ENCODE measurements at regions of chr2 and their contacts with region 1.

Region 1: GRCh38 chr2:228657807-228658402 is 476.4 kb upstream of the SPHKAP start:
- DNase-seq: no peak
- ATAC-seq: no peak
- H3K4me3 ChIP-seq: no peak overlapping the region
- H3K27ac ChIP-seq: no peak overlapping the region
- H3K4me1 ChIP-seq: no peaks in the 10 kb centered on the region
- H3K27me3 ChIP-seq: no peaks in the 10 kb centered on the region

Region 2: GRCh38 chr2:227939271-227940027 is 718.5 kb before region 1 on chr2:
- intact Hi-C with region 1: loop called in 1 of 4 experiments (anchors 5 kb)
- DNase-seq: no peak
- ATAC-seq: peak in 1 of 2 donors; percentile 56
- H3K4me3 ChIP-seq: no peak overlapping the region
- H3K27ac ChIP-seq: no peak overlapping the region
- H3K4me1 ChIP-seq: no peaks in the 10 kb centered on the region
- H3K27me3 ChIP-seq: no peaks in the 10 kb centered on the region

Region 3: GRCh38 chr2:228048838-228049490 is 608.9 kb before region 1 on chr2:
- intact Hi-C with region 1: loop called (anchors 10 kb)
- DNase-seq: no peak
- ATAC-seq: peak; percentile 81 to 88
- H3K4me3 ChIP-seq: no peak overlapping the region
- H3K27ac ChIP-seq: no peak overlapping the region
- H3K4me1 ChIP-seq: no peaks in the 10 kb centered on the region
- H3K27me3 ChIP-seq: no peaks in the 10 kb centered on the region

Region 4: DNA sequence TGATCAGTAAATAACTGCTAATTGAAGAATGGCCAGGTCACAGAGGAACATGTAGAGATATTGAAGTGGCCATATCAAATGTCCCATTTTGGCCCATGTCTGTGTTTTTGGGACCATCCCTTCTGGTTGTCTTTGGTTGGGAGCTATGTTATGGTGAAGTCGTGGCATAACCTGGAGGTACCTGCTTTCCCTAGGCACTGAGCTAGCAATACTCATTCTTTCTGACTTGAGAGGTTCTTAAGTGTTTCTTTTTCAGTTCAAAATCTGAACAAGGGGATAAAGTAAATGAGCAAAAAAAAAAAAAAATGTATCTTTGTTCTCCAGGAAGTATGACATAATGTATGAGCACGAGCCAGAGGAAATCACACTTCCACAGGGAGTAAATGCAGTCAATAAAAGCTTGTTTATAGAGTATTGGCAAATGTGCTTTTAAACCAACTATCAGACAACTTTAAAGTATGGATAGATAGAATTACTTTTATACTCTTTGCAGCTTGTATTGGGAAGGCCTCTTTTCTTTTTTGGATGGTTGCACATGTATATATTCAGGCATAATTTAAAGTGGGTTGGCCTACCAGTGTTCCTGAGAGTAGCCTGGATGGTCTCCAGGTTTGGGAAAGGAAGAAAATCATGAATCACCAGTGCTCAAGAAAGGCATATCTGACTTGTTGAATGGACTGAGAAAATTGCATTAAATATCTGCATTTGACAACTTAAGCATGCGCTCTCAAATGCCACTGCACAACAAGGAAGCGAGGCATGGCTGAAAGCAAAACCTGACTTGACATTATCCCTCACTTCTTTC is 601.4 kb before region 1 on chr2:
- intact Hi-C with region 1: loop called in 1 of 4 experiments (anchors 10 kb)
- DNase-seq: no peak
- ATAC-seq: no peak
- H3K4me3 ChIP-seq: no peak overlapping the region
- H3K27ac ChIP-seq: no peak overlapping the region
- H3K4me1 ChIP-seq: peaks cover 1% of the 10 kb centered on the region
- H3K27me3 ChIP-seq: no peaks in the 10 kb centered on the region

Region 5: DNA sequence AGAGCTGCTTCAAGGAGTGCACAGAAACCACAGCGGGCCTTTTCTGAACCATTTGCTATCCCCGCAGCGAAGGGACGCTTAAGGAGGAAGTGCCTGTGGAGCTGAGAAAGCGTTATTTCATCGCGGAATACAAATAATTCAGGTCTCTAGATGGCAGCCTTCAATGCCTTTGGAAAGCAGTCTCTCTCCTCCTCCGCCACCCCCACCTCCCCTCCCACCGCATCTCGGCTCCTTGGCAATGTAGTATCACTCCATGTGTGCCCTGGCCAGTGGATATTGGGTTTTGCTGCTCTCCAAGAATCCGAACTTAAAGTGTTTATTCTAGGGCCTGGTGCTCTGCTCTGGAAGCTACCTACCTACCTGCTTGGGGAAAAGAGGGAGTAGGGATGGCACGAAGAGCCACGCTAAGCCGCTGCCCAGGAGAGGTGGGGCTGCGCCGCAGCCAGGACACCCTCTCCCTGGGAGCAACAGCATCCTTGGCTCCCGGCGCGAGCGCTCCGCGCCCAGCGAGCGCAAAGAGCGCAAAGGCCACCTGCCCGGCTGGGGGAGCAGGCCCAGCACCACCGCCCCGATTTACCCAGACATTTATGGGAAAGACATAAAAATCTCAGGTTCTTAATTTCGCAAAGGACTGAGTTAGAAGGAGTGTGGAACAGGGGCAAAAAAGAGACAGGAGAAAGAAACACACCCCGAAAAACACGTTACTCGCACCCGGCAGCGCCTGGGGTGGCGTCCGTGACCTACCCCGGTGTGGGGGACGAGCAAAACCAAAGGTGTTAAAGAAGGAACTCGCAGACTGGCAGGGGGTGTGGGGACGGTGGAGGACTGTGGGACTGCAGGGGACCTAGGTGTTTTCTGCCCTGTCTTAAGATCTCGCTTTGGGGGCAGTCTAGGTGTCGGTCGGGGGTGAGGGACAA is 477.5 kb before region 1 on chr2:
- intact Hi-C with region 1: loop called in 1 of 4 experiments (anchors 10 kb)
- DNase-seq: peak in 2 of 3 donors; percentile 56 to 65
- ATAC-seq: peak; percentile 65 to 68
- H3K4me3 ChIP-seq: peak overlapping the region; percentile 16
- H3K27ac ChIP-seq: peak overlapping the region; percentile 50
- H3K4me1 ChIP-seq: no peaks in the 10 kb centered on the region
- H3K27me3 ChIP-seq: no peaks in the 10 kb centered on the region

Region 6: GRCh38 chr2:228318218-228318617 is 339.7 kb before region 1 on chr2:
- intact Hi-C with region 1: loop called in 2 of 4 experiments (anchors 10 kb)
- DNase-seq: peak in 2 of 3 donors; percentile 41 to 54
- ATAC-seq: peak; percentile 43 to 61
- H3K4me3 ChIP-seq: no peak overlapping the region
- H3K27ac ChIP-seq: no peak overlapping the region
- H3K4me1 ChIP-seq: no peaks in the 10 kb centered on the region
- H3K27me3 ChIP-seq: no peaks in the 10 kb centered on the region

Measured in right cardiac atrium (tissue), 5 donors.